CD8-positive, alpha-beta memory T cell (primary cell): ENCODE measurements at regions of chr2 and their contacts with region 1.

Region 1: GRCh38 chr2:70142590-70143313 is 48.1 kb downstream of the C2orf42 start:
- DNase-seq: peak; percentile 99 to 100 (median 100)
- H3K4me3 ChIP-seq: peak overlapping the region; percentile 65
- H3K4me3 Mint-ChIP-seq: peak overlapping the region; percentile 83 to 94 (median 91)
- H3K27ac ChIP-seq: peak overlapping the region; percentile 99
- H3K27ac Mint-ChIP-seq: peak overlapping the region; percentile 98 to 100 (median 100)
- H3K4me1 ChIP-seq: peaks cover 46% of the 10 kb centered on the region
- H3K4me1 Mint-ChIP-seq: peaks cover 48 to 70% (median 55%) of the 10 kb centered on the region in 3 donors
- H3K27me3 ChIP-seq: no peaks in the 10 kb centered on the region
- H3K27me3 Mint-ChIP-seq: peaks cover 0 to 4% of the 10 kb centered on the region in 2 donors

Region 2: DNA sequence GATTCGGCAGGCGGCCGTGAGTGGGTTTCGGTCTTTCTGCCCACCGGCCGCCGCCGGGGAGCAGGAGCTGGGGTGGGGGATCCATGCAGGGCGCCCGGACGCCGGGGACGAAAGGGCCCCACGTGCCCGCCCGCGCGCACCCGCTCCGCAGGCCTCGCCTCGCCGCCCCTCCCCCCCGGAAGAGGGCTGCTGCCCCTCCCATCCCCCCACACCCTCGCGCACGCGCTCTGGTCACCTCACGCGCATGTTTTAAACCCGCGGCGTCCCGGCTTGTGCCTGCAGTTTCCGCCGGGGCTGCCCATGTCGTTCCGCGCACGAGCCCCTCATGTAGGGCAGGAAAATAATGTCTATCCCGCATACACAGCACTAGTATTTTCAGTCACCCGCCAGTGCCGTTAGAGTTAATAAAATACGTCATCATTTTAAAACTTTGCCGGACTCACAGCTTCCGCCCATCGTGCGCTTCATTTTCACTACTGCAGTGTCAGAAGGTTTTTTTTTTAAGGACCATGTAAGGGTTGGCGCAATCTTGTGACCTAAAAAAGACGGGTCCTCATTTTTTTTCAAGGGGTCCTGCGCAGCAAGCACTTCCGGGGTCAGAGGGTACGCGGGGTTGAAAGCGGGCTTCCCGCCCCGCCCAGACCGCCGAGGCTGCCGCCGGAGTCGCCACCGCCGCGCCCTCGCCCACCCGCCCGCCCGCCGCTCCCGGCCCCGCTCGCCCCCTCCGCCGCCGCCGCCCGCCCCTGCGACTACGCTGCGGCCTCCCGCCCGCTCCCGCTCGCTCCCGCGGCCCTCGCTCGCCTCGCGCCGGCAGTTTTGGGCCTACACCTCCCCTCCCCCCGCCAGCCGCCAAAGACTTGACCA is 55.7 kb before region 1 on chr2 and contains the start of gene PCBP1:
- CTCF ChIA-PET with region 1: interaction called, 54 read pairs
- POLR2A ChIA-PET with region 1: interaction called, 168 read pairs
- DNase-seq: peak; percentile 92 to 98 (median 98)
- H3K4me3 ChIP-seq: peak within 1 kb of the TSS; percentile 95
- H3K4me3 Mint-ChIP-seq: peak within 1 kb of the TSS; percentile 94 to 99 (median 96)
- H3K27ac ChIP-seq: peak within 1 kb of the TSS; percentile 99
- H3K27ac Mint-ChIP-seq: peak within 1 kb of the TSS; percentile 100
- H3K4me1 ChIP-seq: peaks cover 65% of the 10 kb centered on the region
- H3K4me1 Mint-ChIP-seq: peaks cover 65 to 79% (median 77%) of the 10 kb centered on the region in 3 donors
- H3K27me3 ChIP-seq: no peaks in the 10 kb centered on the region
- H3K27me3 Mint-ChIP-seq: peaks cover 0 to 5% of the 10 kb centered on the region in 2 donors
- total RNA-seq, gene PCBP1: 428 to 434 TPM

Region 3: DNA sequence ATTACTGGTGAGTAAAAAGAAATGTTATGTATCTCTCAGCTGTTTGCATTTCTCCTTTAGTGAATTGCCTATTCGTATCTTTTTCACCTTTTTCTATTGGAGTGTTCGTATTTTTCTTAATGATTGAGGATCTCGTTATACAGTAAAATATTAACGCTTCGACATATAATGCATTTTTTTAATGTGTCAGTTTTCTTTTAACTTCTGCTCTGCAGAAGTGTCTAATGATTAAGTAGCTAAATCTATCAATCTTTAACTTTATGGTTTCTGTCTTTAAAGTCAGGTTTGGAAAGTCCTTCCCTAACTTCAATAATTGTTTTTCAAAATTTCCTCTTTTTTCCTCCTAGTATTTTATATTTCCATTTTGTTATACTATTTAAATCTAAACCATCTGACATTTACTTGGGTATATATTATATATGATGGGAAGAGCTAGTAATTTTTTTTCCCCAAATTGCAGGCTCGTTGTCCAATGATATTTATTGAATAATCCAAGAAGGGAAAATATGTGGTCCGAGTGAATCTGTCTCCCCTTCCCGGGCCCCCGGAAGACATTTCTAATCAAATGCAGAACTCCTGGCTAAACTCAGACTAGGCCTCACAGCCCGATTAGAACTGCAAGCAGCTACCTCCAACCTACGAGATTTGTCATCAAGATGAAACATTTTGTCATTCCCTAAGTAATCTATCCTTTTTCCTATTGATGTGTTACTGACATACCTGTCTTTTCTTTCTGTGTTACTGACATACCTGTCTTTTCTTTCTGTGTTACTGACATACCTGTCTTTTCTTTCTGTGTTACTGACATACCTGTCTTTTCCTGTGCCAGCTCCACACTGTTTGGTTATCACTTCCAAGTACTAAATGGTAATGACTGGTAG is 38.3 kb before region 1 on chr2:
- CTCF ChIA-PET with region 1: interaction called, 18 read pairs
- POLR2A ChIA-PET with region 1: interaction called, 16 read pairs
- DNase-seq: peak in 1 of 5 donors; percentile 50
- H3K4me3 ChIP-seq: peak overlapping the region; percentile 42
- H3K4me3 Mint-ChIP-seq: peak overlapping the region; percentile 79 to 89 (median 80)
- H3K27ac ChIP-seq: peak overlapping the region; percentile 52
- H3K27ac Mint-ChIP-seq: peak overlapping the region; percentile 94 to 97 (median 96)
- H3K4me1 ChIP-seq: peaks cover 42% of the 10 kb centered on the region
- H3K4me1 Mint-ChIP-seq: peaks cover 41 to 58% (median 55%) of the 10 kb centered on the region in 3 donors
- H3K27me3 ChIP-seq: no peaks in the 10 kb centered on the region
- H3K27me3 Mint-ChIP-seq: no peaks in the 10 kb centered on the region

Region 4: GRCh38 chr2:70132244-70133126 is 10.3 kb before region 1 on chr2:
- CTCF ChIA-PET with region 1: interaction called, 16 read pairs
- POLR2A ChIA-PET with region 1: interaction called, 21 read pairs
- DNase-seq: peak in 4 of 5 donors; percentile 19 to 72 (median 56)
- H3K4me3 ChIP-seq: peak overlapping the region; percentile 57
- H3K4me3 Mint-ChIP-seq: peak overlapping the region; percentile 75 to 91 (median 84)
- H3K27ac ChIP-seq: peak overlapping the region; percentile 79
- H3K27ac Mint-ChIP-seq: peak overlapping the region; percentile 94 to 99 (median 96)
- H3K4me1 ChIP-seq: peaks cover 86% of the 10 kb centered on the region
- H3K4me1 Mint-ChIP-seq: peaks cover 66 to 86% (median 85%) of the 10 kb centered on the region in 3 donors
- H3K27me3 ChIP-seq: no peaks in the 10 kb centered on the region
- H3K27me3 Mint-ChIP-seq: no peaks in the 10 kb centered on the region